Endothelial cell of umbilical vein (primary cell): ENCODE measurements at regions of chr2 and their contacts with region 1.

Region 1: GRCh38 chr2:42810121-42810970 is 18.0 kb upstream of the HAAO start:
- DNase-seq: peak; percentile 98
- H3K4me3 ChIP-seq: peak overlapping the region; percentile 9 to 44 (median 35)
- H3K27ac ChIP-seq: peak overlapping the region; percentile 85
- H3K4me1 ChIP-seq: peaks cover 11% of the 10 kb centered on the region
- H3K27me3 ChIP-seq: peaks cover 0 to under 1% of the 10 kb centered on the region in 2 experiments
- CTCF ChIP-seq: no peak
- POLR2A ChIP-seq: peak; percentile 91

Region 2: GRCh38 chr2:42775810-42776209 is 34.5 kb before region 1 on chr2:
- CTCF ChIA-PET with region 1: interaction called, 3 read pairs
- POLR2A ChIA-PET with region 1: interaction called, 13 read pairs
- dilution Hi-C with region 1: no loop called
- intact Hi-C with region 1: no loop called
- DNase-seq: no peak
- H3K4me3 ChIP-seq: no peak overlapping the region
- H3K27ac ChIP-seq: no peak overlapping the region
- H3K4me1 ChIP-seq: no peaks in the 10 kb centered on the region
- H3K27me3 ChIP-seq: no peaks in the 10 kb centered on the region
- CTCF ChIP-seq: no peak
- POLR2A ChIP-seq: no peak

Region 3: GRCh38 chr2:42792583-42793333 is 17.6 kb before region 1 on chr2 and contains the start of gene HAAO:
- CTCF ChIA-PET with region 1: interaction called, 7 read pairs
- POLR2A ChIA-PET with region 1: no interaction called
- dilution Hi-C with region 1: no loop called
- intact Hi-C with region 1: loop called (anchors 2 kb)
- DNase-seq: peak; percentile 21
- H3K4me3 ChIP-seq: peak within 1 kb of the TSS; percentile 33 to 47 (median 44)
- H3K27ac ChIP-seq: no peak within 1 kb of the TSS
- H3K4me1 ChIP-seq: peaks cover 4% of the 10 kb centered on the region
- H3K27me3 ChIP-seq: peaks cover 11 to 12% of the 10 kb centered on the region in 2 experiments
- CTCF ChIP-seq: peak in 1 of 2 donors; percentile 17
- POLR2A ChIP-seq: no peak
- total RNA-seq, gene HAAO: 0.60 and 0.82 TPM in 2 replicates

Region 4: DNA sequence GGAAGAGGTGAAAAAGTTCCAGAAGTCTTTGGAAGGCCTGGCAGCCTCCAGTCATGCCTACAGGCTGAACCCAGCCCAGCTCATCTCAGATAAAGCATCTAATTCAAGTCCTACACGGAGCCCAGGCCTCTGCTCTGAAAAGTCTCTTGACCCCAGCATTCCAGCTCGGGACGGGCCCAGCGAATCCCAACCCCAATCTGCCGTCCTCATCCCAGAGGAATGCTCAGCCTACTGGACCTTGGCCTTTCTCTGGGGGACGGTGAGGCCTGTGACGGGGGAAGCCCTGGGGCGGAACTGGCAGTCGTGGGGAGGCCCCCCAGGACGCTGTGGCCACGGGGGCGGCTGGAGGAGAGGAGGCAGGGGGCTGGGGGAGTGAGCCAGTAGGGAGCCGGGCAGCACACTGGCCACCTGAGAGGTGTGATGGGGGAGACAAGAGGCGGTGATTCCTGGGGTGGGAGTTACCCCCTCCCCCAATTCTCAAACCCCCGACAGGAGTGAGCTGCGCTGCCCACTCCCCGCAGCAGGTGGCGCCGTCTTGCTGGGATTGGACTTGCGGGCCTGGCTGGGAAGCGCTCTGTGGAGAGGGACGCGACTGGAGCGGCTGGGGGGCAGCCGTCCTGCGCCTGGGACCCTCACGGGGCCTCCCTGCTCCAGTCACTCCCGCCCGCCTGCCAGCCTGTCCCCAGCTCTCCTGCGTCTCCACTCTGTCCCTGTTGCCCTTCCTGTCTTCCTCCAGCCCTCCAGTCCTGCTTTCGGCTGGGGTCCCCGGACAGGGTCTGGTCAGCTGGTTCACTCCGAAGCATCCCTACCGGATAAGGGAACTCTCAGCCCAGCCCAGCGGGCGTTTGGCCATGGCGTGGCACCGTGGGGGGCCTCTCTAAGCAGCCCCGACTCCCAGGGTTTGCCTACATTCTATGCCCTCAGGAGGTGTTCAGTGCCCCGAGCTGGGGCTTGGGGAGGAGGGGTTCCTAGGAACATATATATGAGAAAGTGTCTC is 164.7 kb after region 1 on chr2:
- CTCF ChIA-PET with region 1: no interaction called
- POLR2A ChIA-PET with region 1: no interaction called
- dilution Hi-C with region 1: no loop called
- intact Hi-C with region 1: no loop called
- DNase-seq: peak; percentile 66
- H3K4me3 ChIP-seq: peak overlapping the region in 2 of 3 experiments; percentile 21 to 44
- H3K27ac ChIP-seq: no peak overlapping the region
- H3K4me1 ChIP-seq: peaks cover 4% of the 10 kb centered on the region
- H3K27me3 ChIP-seq: no peaks in the 10 kb centered on the region
- CTCF ChIP-seq: peak; percentile 81 to 95
- POLR2A ChIP-seq: no peak

Region 5: DNA sequence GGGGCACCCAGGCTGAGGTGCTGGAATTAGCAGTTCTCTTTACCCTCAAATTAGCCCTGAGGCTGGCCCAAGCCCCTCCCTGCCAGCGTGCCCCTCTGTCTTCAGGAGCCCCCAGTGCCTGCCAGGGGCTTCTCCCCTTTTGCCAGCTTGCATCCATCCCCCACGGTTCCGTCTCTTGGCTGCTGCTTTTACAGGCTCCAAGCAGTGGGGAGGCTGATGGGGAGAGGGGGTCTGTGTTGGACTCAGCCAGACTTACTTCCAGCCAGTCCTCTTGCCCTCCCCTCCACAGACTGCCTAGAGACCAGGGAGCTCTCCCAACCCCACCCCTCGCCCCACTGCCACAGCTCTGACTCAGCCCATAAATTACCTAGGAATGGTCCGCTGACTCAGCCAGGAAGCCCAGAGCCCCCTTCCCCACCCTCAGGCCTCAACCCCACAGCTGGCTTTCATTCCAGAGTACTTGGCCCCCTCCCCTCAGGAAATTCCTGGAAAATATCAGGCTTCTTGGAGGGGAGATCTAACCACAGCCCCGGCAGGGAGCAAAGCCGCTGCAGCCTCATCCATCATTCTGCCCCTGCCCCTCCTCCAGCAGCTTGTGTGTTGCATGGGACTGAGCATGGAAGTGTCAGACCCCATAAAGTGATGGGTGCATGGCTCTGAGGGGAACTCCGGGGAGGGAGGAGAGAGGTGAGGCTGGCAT is 231.5 kb after region 1 on chr2:
- CTCF ChIA-PET with region 1: no interaction called
- POLR2A ChIA-PET with region 1: no interaction called
- dilution Hi-C with region 1: no loop called
- intact Hi-C with region 1: no loop called
- DNase-seq: peak; percentile 98
- H3K4me3 ChIP-seq: no peak overlapping the region
- H3K27ac ChIP-seq: peak overlapping the region; percentile 45
- H3K4me1 ChIP-seq: peaks cover 42% of the 10 kb centered on the region
- H3K27me3 ChIP-seq: no peaks in the 10 kb centered on the region
- CTCF ChIP-seq: no peak
- POLR2A ChIP-seq: no peak